HCT116 (cell line): ENCODE measurements at regions of chr15 and their contacts with region 1.

Region 1: GRCh38 chr15:37789881-37790280 is 144.6 kb upstream of the TMCO5A start:
- DNase-seq: no peak
- ATAC-seq: 0 out of 2 replicates have a peak, but pooled peaks have one; percentile 46
- H3K4me3 ChIP-seq: no peak overlapping the region
- H3K27ac ChIP-seq: peak overlapping the region; percentile 37; the same call in 1 of the 2 replicates
- H3K4me1 ChIP-seq: peaks cover 4 to 16% of the 10 kb centered on the region in 2 experiments; a peak in 3 of 4 replicates
- H3K27me3 ChIP-seq: no peaks in the 10 kb centered on the region
- CTCF ChIP-seq: no peak
- POLR2A ChIP-seq: no peak
- RAD21 ChIP-seq: no peak

Region 2: DNA sequence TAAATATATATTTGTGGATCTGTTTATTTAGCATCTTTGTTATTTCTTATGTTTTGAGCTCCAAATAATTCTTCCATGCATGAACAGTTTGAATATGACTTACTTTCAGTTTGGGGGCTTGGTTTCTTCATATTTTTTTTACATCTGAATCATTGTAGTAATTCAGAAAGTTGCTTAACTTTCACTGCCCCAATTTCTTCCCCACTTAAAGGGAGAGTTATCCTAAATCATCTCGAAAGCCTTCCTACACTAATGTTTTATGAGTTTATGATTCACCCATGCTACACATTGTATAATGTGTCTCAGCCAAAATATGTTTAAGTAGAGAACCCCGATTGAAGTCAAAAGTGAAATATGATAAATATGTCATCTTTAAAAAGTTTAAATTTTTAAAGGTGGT is 510.5 kb after region 1 on chr15:
- CTCF ChIA-PET with region 1: no interaction called
- POLR2A ChIA-PET with region 1: no interaction called
- RAD21 ChIA-PET with region 1: no interaction called
- intact Hi-C with region 1: loop called (anchors 5 kb)
- DNase-seq: no peak
- ATAC-seq: no peak
- H3K4me3 ChIP-seq: no peak overlapping the region
- H3K27ac ChIP-seq: no peak overlapping the region
- H3K4me1 ChIP-seq: no peaks in the 10 kb centered on the region
- H3K27me3 ChIP-seq: no peaks in the 10 kb centered on the region
- CTCF ChIP-seq: no peak
- POLR2A ChIP-seq: no peak
- RAD21 ChIP-seq: no peak